CD8-positive, alpha-beta T cell (primary cell): ENCODE measurements at regions of chr2 and their contacts with region 1.

Region 1: GRCh38 chr2:191677646-191678436 is at the start of gene NABP1:
- DNase-seq: peak; percentile 98 to 99 (median 99)
- ATAC-seq: peak; percentile 87
- H3K4me3 ChIP-seq: peak within 1 kb of the TSS; percentile 84 to 87
- H3K4me3 Mint-ChIP-seq: peak within 1 kb of the TSS; percentile 98
- H3K27ac ChIP-seq: peak within 1 kb of the TSS; percentile 95
- H3K27ac Mint-ChIP-seq: peak within 1 kb of the TSS; percentile 99
- H3K4me1 ChIP-seq: peaks cover 47% of the 10 kb centered on the region
- H3K4me1 Mint-ChIP-seq: peaks cover 66% of the 10 kb centered on the region
- H3K27me3 ChIP-seq: no peaks in the 10 kb centered on the region
- H3K27me3 Mint-ChIP-seq: no peaks in the 10 kb centered on the region
- CTCF ChIP-seq: no peak
- total RNA-seq, gene NABP1: 17.5 to 21.1 TPM

Region 2: GRCh38 chr2:190408538-190409271 is 1269.1 kb before region 1 on chr2:
- CTCF ChIA-PET with region 1: no interaction called
- POLR2A ChIA-PET with region 1: no interaction called
- intact Hi-C with region 1: loop called (anchors 5 kb)
- DNase-seq: peak; percentile 62 to 92 (median 80)
- ATAC-seq: peak; percentile 56
- H3K4me3 ChIP-seq: peak overlapping the region; percentile 69 to 89
- H3K4me3 Mint-ChIP-seq: peak overlapping the region; percentile 92
- H3K27ac ChIP-seq: peak overlapping the region; percentile 98 to 99
- H3K27ac Mint-ChIP-seq: peak overlapping the region; percentile 99
- H3K4me1 ChIP-seq: peaks cover 51% of the 10 kb centered on the region
- H3K4me1 Mint-ChIP-seq: peaks cover 45% of the 10 kb centered on the region
- H3K27me3 ChIP-seq: no peaks in the 10 kb centered on the region
- H3K27me3 Mint-ChIP-seq: no peaks in the 10 kb centered on the region
- CTCF ChIP-seq: no peak

Region 3: GRCh38 chr2:191020221-191020741 is 657.6 kb before region 1 on chr2:
- CTCF ChIA-PET with region 1: no interaction called
- POLR2A ChIA-PET with region 1: interaction called, 5 read pairs
- intact Hi-C with region 1: loop called (anchors 2 to 10 kb)
- DNase-seq: peak; percentile 82 to 98 (median 93)
- ATAC-seq: peak; percentile 72
- H3K4me3 ChIP-seq: peak overlapping the region; percentile 73 to 82
- H3K4me3 Mint-ChIP-seq: no peak overlapping the region
- H3K27ac ChIP-seq: peak overlapping the region; percentile 62 to 86
- H3K27ac Mint-ChIP-seq: no peak overlapping the region
- H3K4me1 ChIP-seq: peaks cover 52% of the 10 kb centered on the region
- H3K4me1 Mint-ChIP-seq: peaks cover 28% of the 10 kb centered on the region
- H3K27me3 ChIP-seq: no peaks in the 10 kb centered on the region
- H3K27me3 Mint-ChIP-seq: no peaks in the 10 kb centered on the region
- CTCF ChIP-seq: no peak

Region 4: DNA sequence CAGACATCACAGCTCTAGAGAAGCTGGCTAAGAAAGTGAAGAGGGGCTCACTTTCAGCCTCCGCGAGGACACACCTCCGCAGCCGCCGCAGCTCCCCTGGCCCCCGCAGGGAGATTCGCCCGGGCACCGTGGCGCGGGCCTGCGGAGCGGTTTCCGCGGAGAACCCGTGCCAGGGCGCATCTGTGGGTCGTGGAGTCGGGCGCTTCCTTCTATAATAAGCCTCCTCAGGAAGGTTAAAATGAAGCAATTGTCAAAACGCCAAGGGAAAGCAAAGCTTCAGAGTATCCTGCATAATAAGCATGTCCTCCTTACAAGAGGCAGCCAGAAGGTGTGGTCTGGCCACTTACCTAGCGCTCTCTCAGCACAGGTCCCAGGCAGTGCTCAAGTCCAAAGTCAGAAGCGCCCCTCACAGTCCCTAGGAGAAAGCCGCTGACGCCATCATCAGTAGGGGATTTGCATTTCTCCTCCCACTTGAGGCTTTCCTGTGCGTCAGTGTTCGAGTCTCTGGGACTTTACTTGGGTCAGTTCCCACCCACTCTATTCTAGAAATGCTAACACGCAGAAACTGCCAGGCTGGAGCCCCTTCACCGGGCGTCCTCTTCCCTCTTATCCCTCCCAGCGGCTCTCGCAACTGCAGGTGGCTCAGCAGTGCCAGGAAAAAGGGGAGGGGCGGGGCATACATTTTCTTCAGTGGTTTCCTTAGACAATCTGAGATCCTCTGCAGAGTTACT is 527.1 kb before region 1 on chr2 and contains the start of gene STAT4:
- CTCF ChIA-PET with region 1: no interaction called
- POLR2A ChIA-PET with region 1: interaction called, 5 read pairs
- intact Hi-C with region 1: loop called (anchors 2 to 5 kb)
- DNase-seq: peak; percentile 64 to 98 (median 82)
- ATAC-seq: peak; percentile 82
- H3K4me3 ChIP-seq: peak within 1 kb of the TSS; percentile 80 to 90
- H3K4me3 Mint-ChIP-seq: peak within 1 kb of the TSS; percentile 96
- H3K27ac ChIP-seq: peak within 1 kb of the TSS; percentile 93 to 98
- H3K27ac Mint-ChIP-seq: peak within 1 kb of the TSS; percentile 95
- H3K4me1 ChIP-seq: peaks cover 49% of the 10 kb centered on the region
- H3K4me1 Mint-ChIP-seq: peaks cover 54% of the 10 kb centered on the region
- H3K27me3 ChIP-seq: no peaks in the 10 kb centered on the region
- H3K27me3 Mint-ChIP-seq: no peaks in the 10 kb centered on the region
- CTCF ChIP-seq: no peak
- total RNA-seq, gene STAT4: 136 to 141 TPM

Region 5: GRCh38 chr2:191637182-191638078 is 40.4 kb before region 1 on chr2:
- CTCF ChIA-PET with region 1: interaction called, 8 read pairs
- POLR2A ChIA-PET with region 1: interaction called, 45 read pairs
- intact Hi-C with region 1: loop called (anchors 2 to 5 kb)
- DNase-seq: peak in 3 of 9 experiments; percentile 18 to 63 (median 40)
- ATAC-seq: peak; percentile 94
- H3K4me3 ChIP-seq: no peak overlapping the region
- H3K4me3 Mint-ChIP-seq: peak overlapping the region; percentile 60
- H3K27ac ChIP-seq: peak overlapping the region in 1 of 2 experiments; percentile 47
- H3K27ac Mint-ChIP-seq: peak overlapping the region; percentile 91
- H3K4me1 ChIP-seq: peaks cover 36% of the 10 kb centered on the region
- H3K4me1 Mint-ChIP-seq: peaks cover 46% of the 10 kb centered on the region
- H3K27me3 ChIP-seq: no peaks in the 10 kb centered on the region
- H3K27me3 Mint-ChIP-seq: no peaks in the 10 kb centered on the region
- CTCF ChIP-seq: no peak

Region 6: GRCh38 chr2:191701696-191702095 is 23.9 kb after region 1 on chr2:
- CTCF ChIA-PET with region 1: no interaction called
- POLR2A ChIA-PET with region 1: no interaction called
- intact Hi-C with region 1: no loop called
- DNase-seq: no peak
- ATAC-seq: no peak
- H3K4me3 ChIP-seq: no peak overlapping the region
- H3K4me3 Mint-ChIP-seq: no peak overlapping the region
- H3K27ac ChIP-seq: no peak overlapping the region
- H3K27ac Mint-ChIP-seq: no peak overlapping the region
- H3K4me1 ChIP-seq: no peaks in the 10 kb centered on the region
- H3K4me1 Mint-ChIP-seq: no peaks in the 10 kb centered on the region
- H3K27me3 ChIP-seq: no peaks in the 10 kb centered on the region
- H3K27me3 Mint-ChIP-seq: no peaks in the 10 kb centered on the region
- CTCF ChIP-seq: no peak

Region 7: DNA sequence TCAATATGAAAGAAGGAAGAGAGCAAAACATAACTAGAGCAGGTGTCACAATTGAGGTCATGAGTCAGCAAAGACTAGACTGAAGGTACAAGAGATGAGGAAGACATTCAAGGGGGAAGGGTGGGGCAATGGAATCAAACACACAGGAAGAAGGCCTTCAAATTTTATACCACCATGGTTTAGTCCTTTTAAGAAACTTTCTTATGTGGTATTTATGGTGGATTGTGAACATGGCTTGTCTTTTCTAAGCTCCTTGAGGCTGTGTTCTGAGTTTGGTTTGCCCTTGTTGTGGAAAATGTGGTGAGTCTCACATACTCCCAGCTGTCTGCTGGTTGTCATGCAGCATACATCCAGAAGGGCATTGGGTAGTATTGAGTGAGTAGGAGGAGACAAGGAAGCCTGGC is 62.2 kb after region 1 on chr2:
- CTCF ChIA-PET with region 1: no interaction called
- POLR2A ChIA-PET with region 1: interaction called, 3 read pairs
- intact Hi-C with region 1: loop called in 1 of 2 experiments (anchors 5 kb)
- DNase-seq: peak in 8 of 9 experiments; percentile 12 to 89 (median 45)
- ATAC-seq: peak; percentile 89
- H3K4me3 ChIP-seq: no peak overlapping the region
- H3K4me3 Mint-ChIP-seq: no peak overlapping the region
- H3K27ac ChIP-seq: peak overlapping the region in 1 of 2 experiments; percentile 33
- H3K27ac Mint-ChIP-seq: peak overlapping the region; percentile 66
- H3K4me1 ChIP-seq: peaks cover 19% of the 10 kb centered on the region
- H3K4me1 Mint-ChIP-seq: peaks cover 14% of the 10 kb centered on the region
- H3K27me3 ChIP-seq: no peaks in the 10 kb centered on the region
- H3K27me3 Mint-ChIP-seq: peaks cover 13% of the 10 kb centered on the region
- CTCF ChIP-seq: no peak